ENCODE measurements at regions of chr16 and their contacts with region 1.

Region 1: DNA sequence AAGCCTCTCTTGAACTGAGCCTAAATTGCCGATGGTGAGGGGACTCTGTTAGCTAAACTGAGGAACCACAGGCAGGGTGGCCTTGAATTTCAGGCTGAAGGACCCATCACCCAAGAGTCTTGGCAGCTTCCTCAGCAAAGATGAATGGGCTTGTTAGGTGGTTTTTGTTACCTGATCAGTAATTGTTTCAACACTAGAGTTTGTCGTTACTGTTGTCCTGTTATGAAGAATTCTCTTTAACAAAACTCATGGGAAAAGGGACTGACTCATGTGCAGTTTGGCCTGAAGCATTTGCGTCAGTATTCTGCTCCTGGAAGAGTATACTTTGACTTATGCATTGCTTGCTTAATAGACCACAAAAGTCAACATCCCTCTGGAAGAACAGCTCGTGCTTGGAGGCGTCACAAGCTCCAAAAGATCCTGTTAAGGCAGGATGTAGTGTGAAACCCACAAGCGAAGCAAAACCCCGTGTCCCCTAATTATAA is 206.0 kb downstream of the IRX3 start:
- DNase-seq: no peak
- ATAC-seq: no peak
- H3K4me3 ChIP-seq: no peak overlapping the region
- H3K4me3 Mint-ChIP-seq: no peak overlapping the region
- H3K27ac ChIP-seq: no peak overlapping the region
- H3K27ac Mint-ChIP-seq: no peak overlapping the region
- H3K4me1 ChIP-seq: no peaks in the 10 kb centered on the region
- H3K4me1 Mint-ChIP-seq: no peaks in the 10 kb centered on the region
- H3K27me3 ChIP-seq: no peaks in the 10 kb centered on the region
- H3K27me3 Mint-ChIP-seq: no peaks in the 10 kb centered on the region
- CTCF ChIP-seq: no peak

Region 2: GRCh38 chr16:53266156-53266555 is 814.4 kb before region 1 on chr16:
- CTCF ChIA-PET with region 1: no interaction called
- POLR2A ChIA-PET with region 1: no interaction called
- intact Hi-C with region 1: loop called in 1 of 2 experiments (anchors 5 kb)
- DNase-seq: no peak
- ATAC-seq: no peak
- H3K4me3 ChIP-seq: no peak overlapping the region
- H3K4me3 Mint-ChIP-seq: no peak overlapping the region
- H3K27ac ChIP-seq: no peak overlapping the region
- H3K27ac Mint-ChIP-seq: no peak overlapping the region
- H3K4me1 ChIP-seq: no peaks in the 10 kb centered on the region
- H3K4me1 Mint-ChIP-seq: no peaks in the 10 kb centered on the region
- H3K27me3 ChIP-seq: no peaks in the 10 kb centered on the region
- H3K27me3 Mint-ChIP-seq: no peaks in the 10 kb centered on the region
- CTCF ChIP-seq: no peak

Region 3: GRCh38 chr16:54027126-54027922 is 53.2 kb before region 1 on chr16:
- CTCF ChIA-PET with region 1: no interaction called
- POLR2A ChIA-PET with region 1: no interaction called
- intact Hi-C with region 1: loop called in 1 of 2 experiments (anchors 10 kb)
- DNase-seq: no peak
- ATAC-seq: no peak
- H3K4me3 ChIP-seq: no peak overlapping the region
- H3K4me3 Mint-ChIP-seq: no peak overlapping the region
- H3K27ac ChIP-seq: no peak overlapping the region
- H3K27ac Mint-ChIP-seq: no peak overlapping the region
- H3K4me1 ChIP-seq: no peaks in the 10 kb centered on the region
- H3K4me1 Mint-ChIP-seq: no peaks in the 10 kb centered on the region
- H3K27me3 ChIP-seq: no peaks in the 10 kb centered on the region
- H3K27me3 Mint-ChIP-seq: no peaks in the 10 kb centered on the region
- CTCF ChIP-seq: no peak

Measured in CD8-positive, alpha-beta T cell (primary cell).